Psoas muscle (tissue), 8 donors: ENCODE measurements at regions of chr12 and their contacts with region 1.

Region 1: GRCh38 chr12:122013791-122014590 is 7.7 kb upstream of the BCL7A start:
- DNase-seq: no peak
- ATAC-seq: no peak
- H3K4me3 ChIP-seq: no peak overlapping the region
- H3K27ac ChIP-seq: no peak overlapping the region
- H3K4me1 ChIP-seq: peaks cover 4% of the 10 kb centered on the region
- H3K27me3 ChIP-seq: no peaks in the 10 kb centered on the region
- CTCF ChIP-seq: no peak

Region 2: GRCh38 chr12:121903202-121903601 is 110.8 kb before region 1 on chr12:
- intact Hi-C with region 1: no loop called
- DNase-seq: no peak
- ATAC-seq: peak in 1 of 4 donors; percentile 40
- H3K4me3 ChIP-seq: no peak overlapping the region
- H3K27ac ChIP-seq: no peak overlapping the region
- H3K4me1 ChIP-seq: no peaks in the 10 kb centered on the region
- H3K27me3 ChIP-seq: no peaks in the 10 kb centered on the region
- CTCF ChIP-seq: no peak

Region 3: GRCh38 chr12:121917979-121918678 is 95.9 kb before region 1 on chr12 and contains the start of gene CFAP251:
- intact Hi-C with region 1: loop called in 1 of 2 experiments (anchors 5 kb)
- DNase-seq: peak; percentile 94 to 97
- ATAC-seq: peak; percentile 73 to 97 (median 91)
- H3K4me3 ChIP-seq: peak within 1 kb of the TSS; percentile 64
- H3K27ac ChIP-seq: peak within 1 kb of the TSS; percentile 64
- H3K4me1 ChIP-seq: peaks cover 3% of the 10 kb centered on the region
- H3K27me3 ChIP-seq: no peaks in the 10 kb centered on the region
- CTCF ChIP-seq: peak; percentile 62
- total RNA-seq, gene CFAP251: 0.36 to 0.66 (median 0.63) TPM